Activated T-helper 2 cell treated with anti-CD3 and anti-CD28 coated beads, Interferon-gamma antibody, Interleukin-2, Interleukin-4, amounts not matched to agents 10 μg/mL and 5 μg/mL and 100 μg/mL, durations not matched to agents 14 hours and 24 hours and 36 hours (primary cell): ENCODE measurements at regions of chr17 and their contacts with region 1.

Region 1: GRCh38 chr17:8057691-8058114 is 18.8 kb downstream of the ALOX15B start:
- DNase-seq: peak; percentile 30
- H3K4me3 Mint-ChIP-seq: no peak overlapping the region
- H3K27ac Mint-ChIP-seq: no peak overlapping the region
- H3K4me1 Mint-ChIP-seq: peaks cover 26% of the 10 kb centered on the region
- H3K27me3 Mint-ChIP-seq: peaks cover 47% of the 10 kb centered on the region

Region 2: DNA sequence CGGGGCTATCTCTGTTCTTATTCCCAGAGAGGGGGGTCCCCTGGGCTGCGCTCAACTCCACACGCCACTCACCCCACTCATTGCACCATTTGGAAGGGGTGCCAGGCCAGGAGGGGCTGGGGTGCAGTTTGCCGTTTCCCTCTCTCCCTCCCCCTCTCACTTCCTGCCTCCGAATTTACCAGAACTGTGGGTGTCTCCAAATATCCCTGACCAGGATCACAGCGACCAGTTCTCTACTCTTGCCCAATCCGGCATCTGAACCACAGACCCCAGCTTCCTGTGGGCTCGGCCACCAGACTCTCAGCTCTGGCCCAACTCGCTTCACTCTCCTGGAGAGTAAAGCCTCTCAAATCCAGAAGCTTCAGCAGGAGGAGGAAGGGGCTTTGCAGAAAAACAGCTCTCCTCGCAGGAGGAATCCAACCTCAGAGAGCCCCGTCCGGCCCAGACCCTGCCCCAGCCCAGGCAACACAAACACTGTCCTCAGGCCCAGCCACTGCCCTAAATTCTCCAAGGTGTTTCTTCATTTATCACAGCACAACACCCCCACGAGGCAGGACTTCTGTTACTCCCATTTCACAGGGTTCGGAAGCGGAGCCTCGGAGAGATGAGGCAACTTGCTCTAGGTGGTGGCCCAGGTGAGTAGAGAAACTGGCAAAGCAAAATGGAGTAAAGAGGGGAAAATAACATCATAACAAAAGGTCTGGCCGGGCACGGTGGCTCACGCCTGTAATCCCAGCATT is 942.7 kb before region 1 on chr17:
- intact Hi-C with region 1: no loop called
- DNase-seq: no peak
- H3K4me3 Mint-ChIP-seq: no peak overlapping the region
- H3K27ac Mint-ChIP-seq: no peak overlapping the region
- H3K4me1 Mint-ChIP-seq: no peaks in the 10 kb centered on the region
- H3K27me3 Mint-ChIP-seq: peaks cover 7% of the 10 kb centered on the region

Region 3: GRCh38 chr17:8016632-8017478 is 40.8 kb before region 1 on chr17:
- intact Hi-C with region 1: loop called (anchors 1 kb)
- DNase-seq: peak; percentile 48
- H3K4me3 Mint-ChIP-seq: peak overlapping the region; percentile 75
- H3K27ac Mint-ChIP-seq: no peak overlapping the region
- H3K4me1 Mint-ChIP-seq: peaks cover 10% of the 10 kb centered on the region
- H3K27me3 Mint-ChIP-seq: peaks cover 19% of the 10 kb centered on the region

Region 4: DNA sequence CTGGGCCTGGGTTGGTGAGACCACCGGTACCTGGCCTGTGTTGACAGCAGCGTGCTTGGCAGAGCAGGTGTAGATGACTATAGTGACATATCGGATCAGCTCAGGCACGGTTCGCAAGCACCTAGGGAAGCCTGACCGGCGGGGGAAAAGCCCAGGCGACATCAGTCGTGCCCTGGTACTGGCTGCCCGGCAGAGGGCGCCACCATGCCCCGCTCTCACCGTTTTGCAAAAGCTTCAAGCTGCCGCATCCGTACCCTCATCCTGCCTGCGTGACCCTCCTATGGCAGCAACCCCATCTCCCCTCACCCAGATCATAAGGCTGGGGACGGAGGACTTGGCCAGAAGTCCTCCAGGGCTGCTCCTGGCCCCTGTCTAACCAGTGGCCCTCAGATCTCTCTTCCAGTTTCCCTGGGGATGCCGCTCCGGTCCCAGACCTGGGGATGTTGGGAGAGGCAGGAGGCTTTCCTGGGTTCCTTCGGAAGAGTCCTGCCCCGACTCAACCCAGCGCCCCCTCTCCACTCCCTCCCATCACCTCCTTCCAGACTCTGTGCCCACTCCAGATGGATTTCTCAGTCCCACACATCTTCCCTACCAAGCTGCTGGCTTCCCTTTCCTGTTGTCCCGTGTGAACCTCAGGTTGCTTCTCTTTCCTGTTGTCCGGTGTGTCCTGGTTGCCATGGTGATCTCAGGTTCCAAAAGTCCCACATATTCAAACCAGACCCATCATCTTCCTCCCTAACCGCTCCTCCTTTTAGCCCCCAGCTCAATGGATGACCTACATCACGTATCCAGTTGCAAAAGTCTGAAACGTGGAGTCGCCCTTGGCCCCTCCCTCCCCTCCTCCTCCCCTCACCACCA is 16.2 kb after region 1 on chr17:
- intact Hi-C with region 1: loop called (anchors 2 kb)
- DNase-seq: peak; percentile 73
- H3K4me3 Mint-ChIP-seq: peak overlapping the region; percentile 64
- H3K27ac Mint-ChIP-seq: peak overlapping the region; percentile 58
- H3K4me1 Mint-ChIP-seq: peaks cover 16% of the 10 kb centered on the region
- H3K27me3 Mint-ChIP-seq: peaks cover 55% of the 10 kb centered on the region